ENCODE measurements at regions of chr17 and their contacts with region 1.

Region 1: GRCh38 chr17:12789075-12789776 is at the start of gene ARHGAP44:
- DNase-seq: peak; percentile 55 to 76
- ATAC-seq: peak; percentile 89 to 98 (median 92)
- H3K4me3 ChIP-seq: peak within 1 kb of the TSS; percentile 41 to 89 (median 71)
- H3K27ac ChIP-seq: peak within 1 kb of the TSS in 9 of 10 donors; percentile 44 to 75 (median 58)
- H3K4me1 ChIP-seq: peaks cover 0 to 15% (median 3%) of the 10 kb centered on the region in 9 donors
- H3K27me3 ChIP-seq: peaks cover 0 to 31% (median 0%) of the 10 kb centered on the region in 7 donors
- CTCF ChIP-seq: peak in 1 of 9 donors; percentile 15
- total RNA-seq, gene ARHGAP44: 6.1 to 10.6 (median 8.7) TPM

Region 2: GRCh38 chr17:12568358-12569251 is 220.6 kb before region 1 on chr17:
- intact Hi-C with region 1: no loop called
- DNase-seq: no peak
- ATAC-seq: peak in 2 of 8 donors; percentile 9 to 61
- H3K4me3 ChIP-seq: no peak overlapping the region
- H3K27ac ChIP-seq: no peak overlapping the region
- H3K4me1 ChIP-seq: peaks cover 0 to 23% (median 12%) of the 10 kb centered on the region in 9 donors
- H3K27me3 ChIP-seq: no peaks in the 10 kb centered on the region
- CTCF ChIP-seq: no peak

Region 3: GRCh38 chr17:12744298-12744697 is 44.9 kb before region 1 on chr17:
- intact Hi-C with region 1: loop called in 1 of 10 experiments (anchors 10 kb)
- DNase-seq: peak; percentile 43 to 68
- ATAC-seq: peak; percentile 70 to 97 (median 91)
- H3K4me3 ChIP-seq: peak overlapping the region in 8 of 10 donors; percentile 1 to 38 (median 14)
- H3K27ac ChIP-seq: peak overlapping the region; percentile 24 to 87 (median 79)
- H3K4me1 ChIP-seq: peaks cover 0 to 23% (median 7%) of the 10 kb centered on the region in 9 donors
- H3K27me3 ChIP-seq: no peaks in the 10 kb centered on the region
- CTCF ChIP-seq: no peak

Region 4: DNA sequence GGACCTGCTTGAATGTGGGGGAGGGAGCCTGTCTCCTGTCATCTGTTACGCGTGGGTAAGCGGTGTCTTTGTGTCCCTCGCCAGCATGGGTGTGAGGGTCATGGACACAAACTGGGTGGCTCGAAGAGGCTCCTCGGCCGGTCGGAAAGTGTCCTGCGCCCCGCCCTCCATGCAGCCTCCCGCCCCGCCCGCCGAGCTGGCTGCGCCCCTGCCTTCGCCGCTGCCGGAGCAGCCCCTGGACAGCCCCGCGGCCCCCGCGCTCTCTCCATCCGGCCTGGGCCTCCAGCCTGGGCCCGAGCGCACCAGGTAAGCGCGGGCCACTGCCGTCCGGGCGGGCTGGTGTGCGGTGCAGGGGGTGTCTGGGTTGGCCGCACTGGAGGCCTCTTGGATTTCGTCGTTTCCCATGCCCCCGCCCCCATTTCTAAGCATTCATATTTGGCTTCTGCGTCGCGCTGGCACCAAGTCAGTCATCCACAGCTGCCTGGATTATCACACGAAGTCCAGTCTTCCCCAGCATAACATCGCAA is 184.8 kb after region 1 on chr17:
- intact Hi-C with region 1: loop called in 1 of 10 experiments (anchors 10 kb)
- DNase-seq: no peak
- ATAC-seq: peak; percentile 42 to 81 (median 70)
- H3K4me3 ChIP-seq: peak overlapping the region; percentile 14 to 52 (median 41)
- H3K27ac ChIP-seq: peak overlapping the region in 2 of 10 donors; percentile 4 to 25
- H3K4me1 ChIP-seq: peaks cover 0 to 14% (median 4%) of the 10 kb centered on the region in 9 donors
- H3K27me3 ChIP-seq: peaks cover 0 to 16% (median 0%) of the 10 kb centered on the region in 7 donors
- CTCF ChIP-seq: no peak

Region 5: DNA sequence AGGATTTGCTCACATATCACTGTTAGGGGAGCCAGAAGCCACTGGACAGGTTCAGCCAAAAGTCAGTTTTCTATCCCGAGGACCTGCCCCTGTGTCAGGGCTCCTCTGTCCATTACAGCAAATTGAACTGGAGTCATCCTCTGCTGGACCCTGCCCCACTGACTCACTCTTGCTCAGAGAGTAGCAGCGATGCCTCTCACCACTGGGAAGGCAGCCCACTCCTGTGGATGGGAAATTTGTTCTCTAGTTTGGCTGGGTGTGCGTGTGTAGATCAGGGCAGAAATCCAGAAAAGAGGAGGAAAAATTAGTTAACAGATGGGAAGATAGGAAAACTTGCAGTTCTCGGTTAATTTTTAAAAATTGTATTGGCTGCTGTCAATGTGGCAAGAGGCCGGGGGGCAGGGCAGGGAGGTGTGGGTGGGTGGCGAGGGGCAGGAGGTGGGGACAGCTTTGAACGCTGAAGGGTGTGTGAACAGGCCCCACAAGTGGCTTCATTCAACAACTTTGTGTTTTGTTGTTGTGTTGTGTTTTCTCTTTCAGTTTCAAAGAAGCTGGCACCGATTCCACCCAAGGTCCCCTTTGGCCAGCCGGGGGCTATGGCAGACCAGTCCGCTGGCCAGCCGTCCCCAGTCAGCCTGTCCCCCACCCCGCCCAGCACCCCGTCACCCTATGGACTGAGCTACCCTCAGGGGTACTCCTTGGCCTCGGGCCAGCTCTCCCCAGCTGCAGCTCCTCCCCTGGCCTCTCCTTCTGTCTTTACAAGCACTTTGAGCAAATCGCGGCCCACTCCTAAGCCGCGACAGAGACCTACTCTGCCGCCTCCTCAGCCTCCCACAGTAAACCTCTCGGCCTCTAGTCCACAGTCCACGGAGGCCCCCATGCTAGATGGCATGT is 195.0 kb after region 1 on chr17:
- intact Hi-C with region 1: loop called in 2 of 10 experiments (anchors 10 kb)
- DNase-seq: peak; percentile 54 to 61
- ATAC-seq: peak; percentile 24 to 81 (median 51)
- H3K4me3 ChIP-seq: peak overlapping the region in 5 of 10 donors; percentile 17 to 32 (median 25)
- H3K27ac ChIP-seq: peak overlapping the region; percentile 31 to 79 (median 67)
- H3K4me1 ChIP-seq: peaks cover 6 to 44% (median 25%) of the 10 kb centered on the region in 9 donors
- H3K27me3 ChIP-seq: no peaks in the 10 kb centered on the region
- CTCF ChIP-seq: no peak

Region 6: DNA sequence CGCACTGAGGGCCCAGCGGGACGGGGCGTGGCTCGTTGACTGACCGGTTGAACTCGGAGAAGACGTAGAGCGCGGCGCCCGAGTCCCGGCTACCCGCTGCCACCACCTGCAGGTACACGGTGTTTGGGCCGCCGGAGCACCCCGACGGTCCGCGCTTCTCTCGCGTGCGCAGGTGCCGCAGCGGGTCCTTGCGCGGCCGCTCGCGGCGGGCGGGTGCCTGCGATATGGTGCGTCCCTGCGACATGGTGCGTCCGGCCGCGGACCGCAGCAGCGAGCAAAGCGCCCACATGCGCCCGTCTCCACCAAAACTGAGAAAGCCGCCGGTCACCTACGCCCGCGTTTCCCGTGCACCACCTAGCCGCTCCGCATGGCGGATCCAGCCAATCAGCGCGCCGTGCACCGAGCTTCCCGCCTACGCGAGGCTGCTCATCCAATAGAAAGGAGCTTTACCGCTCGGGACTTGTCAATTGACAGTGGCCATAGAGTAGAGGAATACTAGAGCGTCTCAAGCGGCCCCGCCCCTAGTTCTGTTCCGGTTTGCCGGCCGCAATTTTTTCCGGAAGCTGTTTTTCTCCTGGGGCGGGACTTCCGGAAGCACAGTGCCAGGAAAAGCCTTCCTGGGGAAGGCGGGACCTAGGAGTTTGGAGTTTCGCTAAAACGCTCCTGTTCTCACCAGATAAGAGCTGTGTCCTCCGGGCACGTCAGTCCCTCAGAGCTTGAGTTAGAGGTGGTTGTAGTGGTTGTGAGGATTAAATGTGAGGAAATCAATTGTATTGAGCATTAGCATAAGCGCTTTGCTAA is 228.6 kb after region 1 on chr17 and contains the start of gene ELAC2:
- intact Hi-C with region 1: loop called in 1 of 10 experiments (anchors 10 kb)
- DNase-seq: peak; percentile 95 to 99
- ATAC-seq: peak; percentile 98 to 100 (median 99)
- H3K4me3 ChIP-seq: peak within 1 kb of the TSS; percentile 75 to 100 (median 91)
- H3K27ac ChIP-seq: peak within 1 kb of the TSS; percentile 54 to 93 (median 87)
- H3K4me1 ChIP-seq: peaks cover 0 to 23% (median 11%) of the 10 kb centered on the region in 9 donors
- H3K27me3 ChIP-seq: no peaks in the 10 kb centered on the region
- CTCF ChIP-seq: peak in 3 of 9 donors; percentile 5 to 26 (median 16)
- total RNA-seq, gene ELAC2: 54.2 to 76.8 (median 64.1) TPM